HepG2 (cell line): ENCODE measurements at regions of chr11 and their contacts with region 1.

Region 1: DNA sequence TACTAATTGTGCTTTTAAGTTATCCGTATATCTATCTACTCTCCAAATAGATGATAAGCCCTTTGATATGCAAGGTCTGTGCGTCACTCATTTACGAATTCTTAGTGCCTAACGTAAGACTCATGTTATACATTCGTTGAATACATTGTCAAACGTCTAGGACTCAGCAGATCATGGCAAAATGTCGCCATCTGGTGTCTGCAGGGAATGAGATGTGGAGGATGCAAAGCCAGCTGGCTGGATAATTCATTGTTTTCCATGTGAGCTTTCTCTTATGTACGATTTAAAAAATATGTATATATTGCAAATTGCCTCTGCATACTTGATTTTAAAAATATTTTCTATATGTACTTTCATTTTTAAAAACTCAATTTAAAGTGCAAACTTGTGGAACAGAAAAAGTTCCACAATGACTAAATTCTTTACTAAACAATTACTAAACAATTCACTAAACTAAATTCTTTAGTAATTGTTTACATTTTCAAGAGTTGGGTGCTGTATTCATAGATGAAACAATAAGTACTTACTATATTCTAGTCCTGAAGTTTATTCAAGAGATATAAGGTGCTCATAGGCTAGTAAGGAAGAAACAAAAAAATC is 33.8 kb downstream of the ZNF202 start:
- DNase-seq: peak; percentile 42
- ATAC-seq: peak; percentile 81
- H3K4me3 ChIP-seq: no peak overlapping the region
- H3K27ac ChIP-seq: no peak overlapping the region
- H3K4me1 ChIP-seq: no peaks in the 10 kb centered on the region
- H3K27me3 ChIP-seq: no peaks in the 10 kb centered on the region; a peak in 1 of 5 replicates
- CTCF ChIP-seq: peak; percentile 80
- EP300 ChIP-seq: no peak
- POLR2A ChIP-seq: no peak
- RAD21 ChIP-seq: 0 out of 2 replicates have a peak, but pooled peaks have one; percentile 45

Region 2: DNA sequence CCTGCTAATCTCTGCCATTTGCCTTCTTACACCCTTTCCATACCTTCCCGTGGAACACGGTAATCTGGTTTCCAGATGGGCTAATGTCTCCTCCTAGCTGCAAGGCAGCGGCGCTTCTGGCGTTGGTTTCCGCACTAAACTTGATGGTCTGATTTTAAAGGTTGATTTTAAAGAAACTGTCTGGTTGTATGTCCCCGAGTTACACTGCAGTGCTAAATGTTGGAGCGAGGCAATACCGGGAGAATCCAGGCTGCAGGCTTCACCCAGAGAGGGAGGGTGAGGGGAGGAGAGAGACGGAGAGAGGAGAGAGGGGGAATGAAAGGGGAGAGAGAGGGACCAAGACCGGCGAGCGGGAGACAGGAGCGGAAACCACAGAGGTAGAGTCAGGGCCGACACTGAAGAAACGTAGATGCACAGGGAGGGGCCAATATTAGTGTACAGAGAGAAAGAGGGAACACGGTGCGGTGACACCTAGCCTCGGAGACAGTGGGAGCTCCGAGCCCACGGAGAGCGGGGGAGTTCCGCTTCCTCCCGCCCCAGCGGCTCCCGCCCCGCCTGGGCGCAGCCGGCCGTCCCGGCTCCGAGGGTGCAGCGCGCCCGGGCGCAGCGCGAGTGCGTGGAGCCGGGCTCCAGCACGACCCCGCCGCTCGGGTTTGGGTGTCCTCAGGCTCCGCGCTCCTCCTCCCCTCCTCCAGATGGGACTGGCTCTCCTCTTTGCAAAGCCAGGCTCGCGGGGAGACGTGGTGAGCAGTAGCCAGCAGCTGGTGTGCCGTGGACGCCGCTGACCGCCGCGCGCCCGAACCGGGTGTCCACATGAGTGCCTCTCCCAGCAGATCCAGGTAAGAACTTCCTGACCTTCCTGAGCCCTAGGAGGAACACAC is 349.5 kb before region 1 on chr11:
- CTCF ChIA-PET with region 1: no interaction called
- POLR2A ChIA-PET with region 1: no interaction called
- in situ Hi-C with region 1: no loop called
- intact Hi-C with region 1: no loop called
- DNase-seq: no peak
- ATAC-seq: no peak
- H3K4me3 ChIP-seq: no peak overlapping the region
- H3K27ac ChIP-seq: no peak overlapping the region
- H3K4me1 ChIP-seq: no peaks in the 10 kb centered on the region
- H3K27me3 ChIP-seq: peaks cover 2 to 47% of the 10 kb centered on the region in 2 experiments; a peak in 4 of 5 replicates
- CTCF ChIP-seq: no peak
- EP300 ChIP-seq: no peak
- POLR2A ChIP-seq: no peak
- RAD21 ChIP-seq: no peak

Region 3: GRCh38 chr11:123587044-123587443 is 120.7 kb before region 1 on chr11:
- CTCF ChIA-PET with region 1: no interaction called
- POLR2A ChIA-PET with region 1: no interaction called
- in situ Hi-C with region 1: loop called (anchors 5 kb)
- intact Hi-C with region 1: no loop called
- DNase-seq: peak; percentile 14
- ATAC-seq: peak; percentile 20; the same call in 2 of the 3 replicates
- H3K4me3 ChIP-seq: no peak overlapping the region
- H3K27ac ChIP-seq: no peak overlapping the region
- H3K4me1 ChIP-seq: peaks cover 28% of the 10 kb centered on the region
- H3K27me3 ChIP-seq: no peaks in the 10 kb centered on the region
- CTCF ChIP-seq: no peak
- EP300 ChIP-seq: no peak
- POLR2A ChIP-seq: no peak
- RAD21 ChIP-seq: no peak

Region 4: GRCh38 chr11:123640677-123641494 is 66.8 kb before region 1 on chr11:
- CTCF ChIA-PET with region 1: interaction called, 35 read pairs
- POLR2A ChIA-PET with region 1: no interaction called
- in situ Hi-C with region 1: loop called (anchors 5 kb)
- intact Hi-C with region 1: loop called (anchors 1 kb)
- DNase-seq: peak; percentile 20
- ATAC-seq: peak; percentile 97
- H3K4me3 ChIP-seq: no peak overlapping the region
- H3K27ac ChIP-seq: no peak overlapping the region
- H3K4me1 ChIP-seq: no peaks in the 10 kb centered on the region
- H3K27me3 ChIP-seq: peaks cover 0 to 24% of the 10 kb centered on the region in 2 experiments; a peak in 2 of 5 replicates
- CTCF ChIP-seq: peak; percentile 84
- EP300 ChIP-seq: no peak
- POLR2A ChIP-seq: no peak
- RAD21 ChIP-seq: peak; percentile 41; the same call in 1 of the 2 replicates